CD4-positive, alpha-beta T cell (primary cell): ENCODE measurements at regions of chr14 and their contacts with region 1.

Region 1: DNA sequence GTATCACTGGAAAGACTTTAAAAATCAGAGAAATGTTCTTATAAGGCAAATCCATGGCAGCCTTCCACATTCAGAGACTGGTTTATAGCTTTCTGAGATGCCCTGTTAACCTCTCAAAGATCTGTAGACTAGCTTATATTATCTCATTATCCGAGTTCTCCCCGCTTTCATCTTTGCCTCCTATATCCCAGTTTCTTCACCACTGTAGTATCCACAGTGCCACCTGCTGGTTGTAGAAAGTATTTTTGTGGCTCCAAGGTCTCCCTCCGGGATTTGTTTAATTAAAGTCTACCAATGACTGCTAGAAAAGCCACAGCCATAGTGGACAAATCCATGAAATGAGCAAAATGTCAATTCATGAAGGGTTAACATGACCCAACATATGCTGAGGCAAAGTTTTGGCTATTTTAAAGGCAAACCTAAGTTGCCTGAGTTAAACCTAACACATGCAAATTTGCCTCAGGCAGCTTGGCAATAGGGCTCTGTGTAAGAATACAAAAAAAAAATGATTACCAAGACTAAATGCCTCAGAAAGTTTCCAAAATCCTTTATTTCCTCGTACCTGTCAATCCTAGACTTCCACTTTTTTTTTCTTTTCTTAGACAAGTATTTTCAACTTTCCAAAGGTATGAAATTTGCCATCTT is 218.8 kb upstream of the BMP4 start:
- DNase-seq: peak in 9 of 14 experiments; percentile 3 to 55 (median 15)
- ATAC-seq: no peak
- H3K4me3 ChIP-seq: no peak overlapping the region
- H3K4me3 Mint-ChIP-seq: no peak overlapping the region
- H3K27ac ChIP-seq: no peak overlapping the region
- H3K27ac Mint-ChIP-seq: no peak overlapping the region
- H3K4me1 ChIP-seq: no peaks in the 10 kb centered on the region
- H3K4me1 Mint-ChIP-seq: peaks cover 4% of the 10 kb centered on the region
- H3K27me3 ChIP-seq: peaks cover 2 to 15% of the 10 kb centered on the region in 2 experiments
- H3K27me3 Mint-ChIP-seq: peaks cover 58% of the 10 kb centered on the region
- CTCF ChIP-seq: peak; percentile 75

Region 2: GRCh38 chr14:53533384-53533970 is 641.9 kb before region 1 on chr14:
- CTCF ChIA-PET with region 1: no interaction called
- POLR2A ChIA-PET with region 1: no interaction called
- intact Hi-C with region 1: loop called (anchors 5 kb)
- DNase-seq: no peak
- ATAC-seq: no peak
- H3K4me3 ChIP-seq: no peak overlapping the region
- H3K4me3 Mint-ChIP-seq: no peak overlapping the region
- H3K27ac ChIP-seq: no peak overlapping the region
- H3K27ac Mint-ChIP-seq: no peak overlapping the region
- H3K4me1 ChIP-seq: no peaks in the 10 kb centered on the region
- H3K4me1 Mint-ChIP-seq: no peaks in the 10 kb centered on the region
- H3K27me3 ChIP-seq: no peaks in the 10 kb centered on the region
- H3K27me3 Mint-ChIP-seq: no peaks in the 10 kb centered on the region
- CTCF ChIP-seq: no peak

Region 3: GRCh38 chr14:53539489-53540126 is 635.8 kb before region 1 on chr14:
- CTCF ChIA-PET with region 1: no interaction called
- POLR2A ChIA-PET with region 1: no interaction called
- intact Hi-C with region 1: loop called (anchors 5 kb)
- DNase-seq: peak in 10 of 14 experiments; percentile 1 to 35 (median 18)
- ATAC-seq: no peak
- H3K4me3 ChIP-seq: no peak overlapping the region
- H3K4me3 Mint-ChIP-seq: no peak overlapping the region
- H3K27ac ChIP-seq: no peak overlapping the region
- H3K27ac Mint-ChIP-seq: no peak overlapping the region
- H3K4me1 ChIP-seq: no peaks in the 10 kb centered on the region
- H3K4me1 Mint-ChIP-seq: no peaks in the 10 kb centered on the region
- H3K27me3 ChIP-seq: no peaks in the 10 kb centered on the region
- H3K27me3 Mint-ChIP-seq: no peaks in the 10 kb centered on the region
- CTCF ChIP-seq: peak; percentile 43

Region 4: DNA sequence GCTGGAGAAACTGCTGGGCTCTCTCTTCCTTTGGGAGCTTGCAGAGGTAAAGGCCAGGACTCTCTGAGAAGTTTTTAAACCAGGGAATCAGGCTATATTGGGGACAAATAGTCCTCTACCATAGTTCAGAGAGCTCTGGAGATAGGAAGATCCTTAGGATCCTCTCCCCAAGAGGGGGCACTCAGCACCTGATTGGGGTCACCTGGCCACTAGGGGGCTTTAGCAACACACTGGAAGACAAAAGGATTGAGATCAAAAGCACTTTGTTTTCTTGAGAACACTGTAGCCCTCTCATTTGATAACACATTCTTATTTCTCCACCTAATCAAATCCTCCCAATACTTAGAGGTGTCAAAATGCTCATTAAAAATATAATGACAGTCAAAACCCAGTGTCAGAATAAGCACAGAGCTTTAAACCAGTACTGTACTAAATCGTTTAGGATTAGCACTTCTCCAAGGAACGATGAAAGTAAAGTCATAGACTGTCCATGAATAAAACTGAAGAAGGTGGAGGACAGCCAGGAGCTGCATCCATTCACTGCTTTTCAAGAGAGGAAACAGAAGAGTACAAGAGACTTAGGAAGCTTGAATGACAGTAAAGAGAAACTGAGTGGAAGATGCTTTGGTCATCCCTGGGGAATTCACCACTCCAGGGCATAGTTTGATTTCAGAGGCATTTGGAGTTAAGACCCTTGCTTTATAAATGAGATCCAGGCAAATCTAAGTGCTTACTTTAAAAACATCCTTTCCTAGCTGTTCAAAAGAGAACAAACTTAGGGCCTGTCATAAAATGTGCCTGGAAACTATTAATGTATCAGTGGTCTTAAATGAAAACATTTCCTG is 245.3 kb before region 1 on chr14:
- CTCF ChIA-PET with region 1: no interaction called
- POLR2A ChIA-PET with region 1: no interaction called
- intact Hi-C with region 1: loop called (anchors 5 kb)
- DNase-seq: peak in 7 of 14 experiments; percentile 9 to 53 (median 31)
- ATAC-seq: no peak
- H3K4me3 ChIP-seq: no peak overlapping the region
- H3K4me3 Mint-ChIP-seq: no peak overlapping the region
- H3K27ac ChIP-seq: no peak overlapping the region
- H3K27ac Mint-ChIP-seq: no peak overlapping the region
- H3K4me1 ChIP-seq: no peaks in the 10 kb centered on the region
- H3K4me1 Mint-ChIP-seq: no peaks in the 10 kb centered on the region
- H3K27me3 ChIP-seq: peaks cover 0 to 5% of the 10 kb centered on the region in 2 experiments
- H3K27me3 Mint-ChIP-seq: peaks cover 17% of the 10 kb centered on the region
- CTCF ChIP-seq: peak; percentile 32